CD8-positive, alpha-beta T cell (primary cell): ENCODE measurements at regions of chr9 and their contacts with region 1.

Region 1: DNA sequence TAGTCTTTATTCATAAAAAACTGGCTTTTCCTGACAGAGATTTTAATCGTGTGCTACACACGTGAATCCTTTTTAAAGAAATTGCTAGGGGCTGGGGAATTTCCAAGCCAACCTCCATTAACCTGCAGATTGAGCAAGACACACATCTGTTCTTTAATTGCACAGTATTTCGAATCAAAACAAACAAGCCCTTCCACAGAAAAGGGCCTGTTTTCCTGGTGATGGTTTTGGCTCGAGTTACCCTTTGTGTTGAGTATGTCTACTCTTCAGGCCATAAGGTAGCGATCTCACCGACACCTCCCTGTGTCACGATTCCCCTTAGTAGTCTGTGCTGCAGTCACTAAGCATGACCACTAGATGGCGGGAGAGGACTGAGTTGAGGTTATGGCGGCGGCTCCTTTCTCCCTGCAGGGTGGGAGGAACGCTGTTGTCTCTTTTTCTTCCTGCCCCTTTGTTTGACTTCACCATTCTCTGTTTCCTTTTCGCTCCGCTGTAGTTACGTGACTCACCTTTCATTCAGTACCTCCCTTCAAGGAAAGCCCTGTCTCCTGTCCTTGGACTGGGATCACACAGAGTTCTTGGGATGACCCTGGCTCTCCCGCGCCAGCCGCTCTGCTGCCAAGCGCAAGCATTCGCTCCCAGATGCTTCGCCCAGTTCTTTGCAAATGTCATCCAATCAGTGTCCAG is 137.1 kb upstream of the SLC24A2 start:
- DNase-seq: peak; percentile 61 to 87 (median 78)
- ATAC-seq: peak; percentile 100
- H3K4me3 ChIP-seq: peak overlapping the region in 1 of 2 experiments; percentile 26
- H3K4me3 Mint-ChIP-seq: peak overlapping the region; percentile 59
- H3K27ac ChIP-seq: no peak overlapping the region
- H3K27ac Mint-ChIP-seq: no peak overlapping the region
- H3K4me1 ChIP-seq: peaks cover 4% of the 10 kb centered on the region
- H3K4me1 Mint-ChIP-seq: peaks cover 8% of the 10 kb centered on the region
- H3K27me3 ChIP-seq: no peaks in the 10 kb centered on the region
- H3K27me3 Mint-ChIP-seq: peaks cover 9% of the 10 kb centered on the region
- CTCF ChIP-seq: peak; percentile 87

Region 2: DNA sequence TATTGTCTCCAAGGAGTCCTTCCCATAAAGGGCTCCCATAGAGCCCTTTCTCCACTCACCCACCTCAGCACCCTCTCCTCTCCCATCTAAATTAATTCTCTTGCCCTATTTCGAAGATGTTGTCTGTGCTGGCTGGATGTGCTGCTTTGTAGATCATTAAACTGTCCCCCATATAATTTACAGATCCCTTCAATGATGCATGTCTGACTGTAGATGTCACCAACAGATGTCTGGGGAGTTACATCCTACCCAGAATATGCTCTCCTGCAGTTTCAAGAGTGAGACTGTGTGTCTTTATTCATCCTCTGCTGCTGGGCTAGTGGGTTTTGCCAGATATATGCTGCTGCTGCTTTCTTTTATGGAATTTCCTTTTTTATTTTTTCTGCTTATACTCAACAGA is 345.1 kb after region 1 on chr9:
- CTCF ChIA-PET with region 1: interaction called, 3 read pairs
- POLR2A ChIA-PET with region 1: no interaction called
- intact Hi-C with region 1: loop called in 1 of 2 experiments (anchors 10 kb)
- DNase-seq: peak in 2 of 9 experiments; percentile 4 to 9
- ATAC-seq: no peak
- H3K4me3 ChIP-seq: no peak overlapping the region
- H3K4me3 Mint-ChIP-seq: no peak overlapping the region
- H3K27ac ChIP-seq: no peak overlapping the region
- H3K27ac Mint-ChIP-seq: no peak overlapping the region
- H3K4me1 ChIP-seq: no peaks in the 10 kb centered on the region
- H3K4me1 Mint-ChIP-seq: peaks cover 4% of the 10 kb centered on the region
- H3K27me3 ChIP-seq: no peaks in the 10 kb centered on the region
- H3K27me3 Mint-ChIP-seq: no peaks in the 10 kb centered on the region
- CTCF ChIP-seq: no peak

Region 3: DNA sequence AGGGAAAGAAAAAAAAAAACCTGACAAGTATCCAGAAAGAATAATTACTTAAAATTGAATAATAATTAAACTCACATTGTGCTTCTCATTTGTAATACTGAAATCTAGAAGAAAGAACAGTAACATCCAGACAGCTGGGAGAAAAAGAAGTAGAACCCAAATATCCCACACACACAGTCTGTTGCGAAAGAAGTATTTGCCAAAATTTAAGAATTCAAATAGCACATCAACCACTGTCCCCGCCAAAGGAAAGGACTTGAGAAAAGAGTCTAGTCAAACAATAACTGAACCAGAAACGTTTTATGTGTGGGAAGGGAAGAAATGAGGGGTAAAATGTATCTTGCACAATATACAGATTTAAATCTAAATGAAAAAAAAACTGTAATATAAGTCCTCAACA is 493.6 kb after region 1 on chr9:
- CTCF ChIA-PET with region 1: no interaction called
- POLR2A ChIA-PET with region 1: no interaction called
- intact Hi-C with region 1: loop called in 1 of 2 experiments (anchors 5 kb)
- DNase-seq: no peak
- ATAC-seq: no peak
- H3K4me3 ChIP-seq: no peak overlapping the region
- H3K4me3 Mint-ChIP-seq: no peak overlapping the region
- H3K27ac ChIP-seq: no peak overlapping the region
- H3K27ac Mint-ChIP-seq: no peak overlapping the region
- H3K4me1 ChIP-seq: no peaks in the 10 kb centered on the region
- H3K4me1 Mint-ChIP-seq: peaks cover 39% of the 10 kb centered on the region
- H3K27me3 ChIP-seq: no peaks in the 10 kb centered on the region
- H3K27me3 Mint-ChIP-seq: no peaks in the 10 kb centered on the region
- CTCF ChIP-seq: no peak

Region 4: GRCh38 chr9:20604562-20604961 is 678.6 kb after region 1 on chr9:
- CTCF ChIA-PET with region 1: no interaction called
- POLR2A ChIA-PET with region 1: no interaction called
- intact Hi-C with region 1: loop called in 1 of 2 experiments (anchors 5 kb)
- DNase-seq: peak in 2 of 9 experiments; percentile 13 to 38
- ATAC-seq: peak; percentile 59
- H3K4me3 ChIP-seq: no peak overlapping the region
- H3K4me3 Mint-ChIP-seq: peak overlapping the region; percentile 55
- H3K27ac ChIP-seq: no peak overlapping the region
- H3K27ac Mint-ChIP-seq: peak overlapping the region; percentile 53
- H3K4me1 ChIP-seq: peaks cover 35% of the 10 kb centered on the region
- H3K4me1 Mint-ChIP-seq: peaks cover 83% of the 10 kb centered on the region
- H3K27me3 ChIP-seq: no peaks in the 10 kb centered on the region
- H3K27me3 Mint-ChIP-seq: no peaks in the 10 kb centered on the region
- CTCF ChIP-seq: no peak

Region 5: GRCh38 chr9:20941174-20941690 is 1015.3 kb after region 1 on chr9:
- CTCF ChIA-PET with region 1: interaction called, 82 read pairs
- POLR2A ChIA-PET with region 1: no interaction called
- intact Hi-C with region 1: loop called (anchors 1 kb)
- DNase-seq: peak; percentile 4 to 80 (median 45)
- ATAC-seq: peak; percentile 90
- H3K4me3 ChIP-seq: no peak overlapping the region
- H3K4me3 Mint-ChIP-seq: no peak overlapping the region
- H3K27ac ChIP-seq: no peak overlapping the region
- H3K27ac Mint-ChIP-seq: no peak overlapping the region
- H3K4me1 ChIP-seq: peaks cover 3% of the 10 kb centered on the region
- H3K4me1 Mint-ChIP-seq: peaks cover 3% of the 10 kb centered on the region
- H3K27me3 ChIP-seq: no peaks in the 10 kb centered on the region
- H3K27me3 Mint-ChIP-seq: no peaks in the 10 kb centered on the region
- CTCF ChIP-seq: peak; percentile 82